Motor neuron (in vitro differentiated cells): ENCODE measurements at regions of chr20 and their contacts with region 1.

Region 1: GRCh38 chr20:62143118-62143973 is at the starts of genes PSMA7 and SS18L1:
- ATAC-seq: peak; percentile 75 to 89 (median 87)
- H3K4me3 ChIP-seq: peak within 1 kb of the TSS; percentile 82 to 98 (median 97)
- H3K27ac ChIP-seq: peak within 1 kb of the TSS; percentile 100
- H3K4me1 ChIP-seq: peaks cover 17 to 19% of the 10 kb centered on the region in 2 donors
- total RNA-seq, gene PSMA7: 233 to 413 (median 253) TPM
- total RNA-seq, gene SS18L1: 9.5 to 32.0 (median 29.5) TPM

Region 2: GRCh38 chr20:61797200-61797599 is 346.1 kb before region 1 on chr20:
- in situ Hi-C with region 1: no loop called
- ATAC-seq: peak in 2 of 8 experiments; percentile 10 to 44
- H3K4me3 ChIP-seq: no peak overlapping the region
- H3K27ac ChIP-seq: no peak overlapping the region
- H3K4me1 ChIP-seq: peaks cover 13% of the 10 kb centered on the region in 2 donors

Region 3: GRCh38 chr20:62010551-62011402 is 132.6 kb before region 1 on chr20:
- in situ Hi-C with region 1: loop called in 5 of 9 experiments (anchors 25 kb)
- ATAC-seq: peak; percentile 73 to 97 (median 82)
- H3K4me3 ChIP-seq: no peak overlapping the region
- H3K27ac ChIP-seq: no peak overlapping the region
- H3K4me1 ChIP-seq: no peaks in the 10 kb centered on the region